ENCODE measurements at regions of chr10 and their contacts with region 1.

Region 1: GRCh38 chr10:50874723-50875122 is 10.7 kb downstream of the A1CF start:
- DNase-seq: no peak
- H3K4me3 ChIP-seq: no peak overlapping the region
- H3K27ac ChIP-seq: no peak overlapping the region
- H3K4me1 ChIP-seq: no peaks in the 10 kb centered on the region
- H3K27me3 ChIP-seq: no peaks in the 10 kb centered on the region
- CTCF ChIP-seq: no peak
- POLR2A ChIP-seq: no peak

Region 2: DNA sequence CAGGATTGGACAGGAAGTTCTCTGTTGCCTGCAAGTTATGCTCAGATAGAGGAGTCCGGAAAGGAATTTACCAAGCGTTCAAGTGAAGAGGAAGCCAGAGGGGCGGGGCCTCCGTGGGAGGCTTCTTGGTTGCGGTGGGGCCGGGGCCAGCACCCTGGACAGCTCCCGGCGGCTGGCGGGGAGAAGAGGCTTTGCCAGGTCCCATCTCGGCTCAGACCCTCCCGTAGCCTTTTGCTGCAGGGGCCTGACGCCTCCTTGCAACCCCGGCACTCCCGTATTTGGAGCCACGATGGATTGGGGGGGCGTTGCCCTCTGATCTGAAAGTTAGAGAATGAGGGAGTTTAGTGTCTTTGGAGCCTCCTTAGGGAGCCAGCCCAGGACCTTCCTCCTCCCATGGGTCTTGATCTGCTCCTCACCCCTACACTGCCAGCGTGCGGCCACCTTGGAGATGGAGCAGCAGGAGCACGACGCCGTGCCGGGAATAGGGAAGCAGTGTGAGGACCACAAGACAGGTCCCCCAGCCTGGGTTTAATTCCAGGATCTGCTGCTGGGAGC is 1267.7 kb before region 1 on chr10:
- intact Hi-C with region 1: loop called (anchors 5 kb)
- DNase-seq: peak in 1 of 2 donors; percentile 56
- H3K4me3 ChIP-seq: no peak overlapping the region
- H3K27ac ChIP-seq: no peak overlapping the region
- H3K4me1 ChIP-seq: peaks cover 35% of the 10 kb centered on the region
- H3K27me3 ChIP-seq: peaks cover 3% of the 10 kb centered on the region
- CTCF ChIP-seq: no peak
- POLR2A ChIP-seq: no peak

Region 3: GRCh38 chr10:50788951-50789945 is 85.5 kb before region 1 on chr10:
- intact Hi-C with region 1: no loop called
- DNase-seq: no peak
- H3K4me3 ChIP-seq: no peak overlapping the region
- H3K27ac ChIP-seq: no peak overlapping the region
- H3K4me1 ChIP-seq: no peaks in the 10 kb centered on the region
- H3K27me3 ChIP-seq: no peaks in the 10 kb centered on the region
- CTCF ChIP-seq: no peak
- POLR2A ChIP-seq: no peak

Region 4: GRCh38 chr10:50972591-50972990 is 97.9 kb after region 1 on chr10:
- intact Hi-C with region 1: no loop called
- DNase-seq: no peak
- H3K4me3 ChIP-seq: no peak overlapping the region
- H3K27ac ChIP-seq: no peak overlapping the region
- H3K4me1 ChIP-seq: no peaks in the 10 kb centered on the region
- H3K27me3 ChIP-seq: no peaks in the 10 kb centered on the region
- CTCF ChIP-seq: no peak
- POLR2A ChIP-seq: no peak

Region 5: DNA sequence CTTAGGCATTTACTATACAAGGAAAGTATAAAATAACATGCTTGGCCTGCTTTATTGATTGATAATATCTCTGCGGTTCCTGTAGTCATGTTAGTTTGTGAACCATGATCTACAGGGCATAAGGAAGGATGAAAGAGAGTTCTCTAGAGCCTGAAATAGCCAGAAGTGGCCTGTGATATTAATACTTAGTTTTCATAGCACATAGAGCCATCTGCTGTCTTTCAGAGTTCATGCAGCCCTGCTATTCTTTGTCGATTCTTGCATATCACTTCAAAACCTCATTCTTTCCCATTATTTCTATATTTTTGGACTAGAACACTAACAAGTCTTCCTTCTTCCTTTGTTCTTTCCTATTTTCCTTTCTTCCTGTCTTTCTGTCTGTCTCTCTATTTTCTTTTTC is 173.1 kb after region 1 on chr10:
- intact Hi-C with region 1: no loop called
- DNase-seq: no peak
- H3K4me3 ChIP-seq: no peak overlapping the region
- H3K27ac ChIP-seq: no peak overlapping the region
- H3K4me1 ChIP-seq: no peaks in the 10 kb centered on the region
- H3K27me3 ChIP-seq: no peaks in the 10 kb centered on the region
- CTCF ChIP-seq: no peak
- POLR2A ChIP-seq: no peak

Region 6: DNA sequence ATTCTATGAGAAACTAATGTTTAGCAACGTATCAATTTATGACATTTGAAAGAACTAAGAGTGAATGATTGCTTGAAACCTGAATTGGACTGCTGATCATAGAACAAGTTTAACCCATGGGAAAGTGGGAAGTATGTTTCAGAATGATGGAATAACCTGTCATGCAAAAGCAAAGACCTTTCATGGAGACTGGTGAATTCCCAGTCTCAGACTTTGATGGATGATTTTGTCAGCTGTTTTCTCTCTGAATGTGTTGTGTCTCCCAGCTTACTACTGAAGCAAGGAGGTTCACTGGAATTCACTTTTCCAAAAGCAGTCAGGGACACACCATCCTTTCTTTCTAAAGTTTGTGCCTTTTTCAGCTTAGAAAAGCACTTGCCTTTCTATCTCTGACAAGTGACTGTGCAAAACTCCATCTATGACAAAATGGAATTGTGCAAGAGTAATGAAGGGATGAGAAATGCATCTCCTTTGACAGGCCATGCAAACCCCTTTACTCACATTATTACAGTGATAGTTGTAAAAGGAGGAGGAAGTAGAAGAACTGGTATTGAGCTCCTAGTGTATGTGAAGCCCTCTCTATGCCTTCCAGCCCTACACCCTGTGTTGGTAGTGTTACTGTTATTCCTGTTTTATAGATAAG is 375.7 kb after region 1 on chr10:
- intact Hi-C with region 1: no loop called
- DNase-seq: no peak
- H3K4me3 ChIP-seq: no peak overlapping the region
- H3K27ac ChIP-seq: no peak overlapping the region
- H3K4me1 ChIP-seq: peaks cover 14% of the 10 kb centered on the region
- H3K27me3 ChIP-seq: no peaks in the 10 kb centered on the region
- CTCF ChIP-seq: no peak
- POLR2A ChIP-seq: no peak